ENCODE measurements at regions of chr11 and their contacts with region 1.

Region 1: DNA sequence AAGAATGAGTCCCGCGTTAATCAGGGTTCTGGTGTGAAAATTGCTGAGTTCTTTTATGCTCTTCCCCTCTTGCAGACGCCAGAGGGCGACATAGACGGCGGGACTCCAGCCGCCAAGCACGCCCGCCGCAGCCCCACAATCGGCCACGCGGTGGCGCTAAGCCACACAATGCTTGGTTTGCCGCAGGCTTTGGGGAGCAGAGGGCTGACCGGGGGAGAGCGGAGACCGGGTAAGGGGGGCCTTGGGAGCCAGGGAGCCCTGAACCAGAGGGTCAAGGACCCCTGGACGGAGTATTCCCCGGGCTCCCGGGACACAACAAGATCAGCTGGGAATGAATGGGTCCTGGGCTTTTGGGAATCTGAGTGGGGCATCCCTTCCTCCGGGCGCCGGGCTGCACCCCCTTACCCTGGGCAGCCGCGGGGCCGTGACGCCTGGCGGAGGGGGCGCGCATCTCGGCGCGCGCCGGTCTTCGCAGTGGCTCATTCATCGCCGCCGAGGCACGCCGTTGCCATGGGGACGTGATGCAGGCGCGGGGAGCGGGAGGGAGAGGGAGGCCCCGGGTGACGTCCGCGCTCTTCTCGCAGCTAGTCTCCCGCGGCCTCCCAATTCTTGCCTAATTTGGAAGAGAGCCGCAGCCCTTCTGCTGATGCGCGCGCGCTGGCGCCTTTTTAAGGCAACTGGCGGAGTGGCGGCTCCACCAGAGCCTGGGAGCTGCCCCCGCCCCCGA is 12.2 kb upstream of the NPAS4 start:
- DNase-seq: peak; percentile 95
- ATAC-seq: peak; percentile 86
- H3K4me3 Mint-ChIP-seq: peak overlapping the region; percentile 67
- H3K27ac Mint-ChIP-seq: no peak overlapping the region
- H3K4me1 Mint-ChIP-seq: peaks cover 3% of the 10 kb centered on the region
- H3K27me3 Mint-ChIP-seq: peaks cover 20% of the 10 kb centered on the region
- CTCF ChIP-seq: peak; percentile 100

Region 2: DNA sequence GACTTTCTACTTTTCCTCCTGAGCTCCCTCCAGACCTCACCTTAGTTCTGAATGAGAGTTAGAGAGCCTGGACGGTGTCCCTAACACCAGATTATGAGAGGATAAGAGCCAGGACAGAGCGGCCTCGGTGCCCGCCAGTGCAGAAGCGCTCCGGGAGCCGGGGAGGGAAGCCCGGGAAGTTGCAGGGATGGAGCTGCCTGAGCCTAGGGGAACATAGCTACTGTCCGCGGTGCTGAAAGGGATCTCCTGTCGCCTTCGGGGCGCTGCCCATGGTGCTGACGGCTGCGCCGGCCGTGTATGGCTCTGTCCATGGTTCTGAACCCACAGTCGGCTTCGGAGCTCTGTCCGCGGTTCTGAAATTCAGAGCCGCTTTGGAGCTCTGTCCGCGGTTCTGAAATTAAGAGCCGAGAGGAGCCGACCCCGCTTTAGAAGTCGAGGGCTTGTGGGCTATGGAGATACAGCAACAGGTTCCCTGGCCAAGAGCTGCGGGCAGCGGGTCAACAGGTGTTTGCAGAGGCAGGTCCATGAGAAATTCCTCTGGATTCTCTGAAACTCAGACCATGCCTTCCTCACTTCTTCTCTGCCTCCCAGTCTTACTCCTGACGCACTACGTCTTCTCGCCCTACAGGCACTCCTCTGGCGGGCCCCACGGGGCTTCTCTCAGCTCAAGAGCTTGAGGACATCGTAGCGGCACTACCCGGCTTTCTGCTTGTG is 13.0 kb after region 1 on chr11:
- CTCF ChIA-PET with region 1: interaction called, 91 read pairs
- POLR2A ChIA-PET with region 1: interaction called, 7 read pairs
- intact Hi-C with region 1: no loop called
- DNase-seq: peak; percentile 92
- ATAC-seq: peak; percentile 82
- H3K4me3 Mint-ChIP-seq: no peak overlapping the region
- H3K27ac Mint-ChIP-seq: no peak overlapping the region
- H3K4me1 Mint-ChIP-seq: peaks cover 28% of the 10 kb centered on the region
- H3K27me3 Mint-ChIP-seq: peaks cover 35% of the 10 kb centered on the region
- CTCF ChIP-seq: no peak

Region 3: GRCh38 chr11:66429983-66430602 is 21.4 kb after region 1 on chr11:
- CTCF ChIA-PET with region 1: interaction called, 91 read pairs
- POLR2A ChIA-PET with region 1: interaction called, 4 read pairs
- intact Hi-C with region 1: no loop called
- DNase-seq: peak; percentile 93
- ATAC-seq: peak; percentile 87
- H3K4me3 Mint-ChIP-seq: no peak overlapping the region
- H3K27ac Mint-ChIP-seq: no peak overlapping the region
- H3K4me1 Mint-ChIP-seq: peaks cover 3% of the 10 kb centered on the region
- H3K27me3 Mint-ChIP-seq: no peaks in the 10 kb centered on the region
- CTCF ChIP-seq: peak; percentile 85

Region 4: DNA sequence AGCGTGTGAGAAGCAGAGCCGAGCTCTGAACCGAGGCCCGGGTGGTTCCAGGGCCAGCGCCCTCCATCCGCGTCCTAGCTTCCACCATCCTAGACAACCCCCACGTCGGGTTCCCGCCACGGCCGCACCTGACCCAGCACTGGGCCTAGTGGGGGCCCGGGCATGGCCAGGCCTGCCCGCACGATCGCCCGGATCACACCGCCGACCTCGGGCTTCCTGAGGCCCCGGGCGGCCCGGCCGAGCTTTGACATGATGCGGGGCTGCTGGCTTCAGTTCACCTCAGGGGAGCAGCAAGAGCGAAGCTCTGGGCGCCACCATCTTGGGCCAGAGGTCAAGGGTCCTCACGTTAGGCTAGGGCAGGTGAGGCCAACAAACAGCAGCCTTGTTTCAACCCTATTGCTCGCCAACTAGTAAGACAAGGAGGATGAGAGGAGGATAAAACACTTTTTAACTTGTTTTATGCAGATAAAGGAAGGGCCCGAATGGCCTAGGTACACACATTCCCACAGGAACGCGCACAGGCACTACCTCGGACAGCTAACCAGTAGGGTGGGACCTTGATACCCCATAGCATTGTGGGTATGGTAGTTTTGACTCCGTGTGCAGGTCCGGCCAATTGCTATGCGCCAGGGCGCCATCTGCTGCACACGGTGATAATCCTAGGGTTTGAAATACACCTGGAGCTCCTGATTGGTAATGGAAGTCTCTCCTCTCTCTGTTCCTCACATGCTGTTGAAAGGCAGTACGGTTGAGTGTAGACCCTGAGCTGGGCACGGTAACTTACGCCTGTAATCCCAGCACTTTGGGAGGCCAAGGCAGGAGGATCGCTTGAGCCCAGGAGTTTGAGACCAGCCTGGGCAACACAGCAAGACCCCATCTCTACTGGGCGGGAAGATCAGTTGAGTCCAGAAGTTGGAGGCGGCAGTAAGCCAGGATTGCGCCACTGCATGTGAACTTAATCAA is 30.1 kb after region 1 on chr11 and contains the start of gene MRPL11:
- CTCF ChIA-PET with region 1: interaction called, 16 read pairs
- POLR2A ChIA-PET with region 1: interaction called, 4 read pairs
- intact Hi-C with region 1: loop called (anchors 5 kb)
- DNase-seq: peak; percentile 97
- ATAC-seq: peak; percentile 99
- H3K4me3 Mint-ChIP-seq: peak within 1 kb of the TSS; percentile 96
- H3K27ac Mint-ChIP-seq: peak within 1 kb of the TSS; percentile 98
- H3K4me1 Mint-ChIP-seq: peaks cover 20% of the 10 kb centered on the region
- H3K27me3 Mint-ChIP-seq: peaks cover 1% of the 10 kb centered on the region
- CTCF ChIP-seq: peak; percentile 58
- total RNA-seq, gene MRPL11: 135 to 142 TPM